Mammary epithelial cell (primary cell): ENCODE measurements at regions of chr3 and their contacts with region 1.

Region 1: DNA sequence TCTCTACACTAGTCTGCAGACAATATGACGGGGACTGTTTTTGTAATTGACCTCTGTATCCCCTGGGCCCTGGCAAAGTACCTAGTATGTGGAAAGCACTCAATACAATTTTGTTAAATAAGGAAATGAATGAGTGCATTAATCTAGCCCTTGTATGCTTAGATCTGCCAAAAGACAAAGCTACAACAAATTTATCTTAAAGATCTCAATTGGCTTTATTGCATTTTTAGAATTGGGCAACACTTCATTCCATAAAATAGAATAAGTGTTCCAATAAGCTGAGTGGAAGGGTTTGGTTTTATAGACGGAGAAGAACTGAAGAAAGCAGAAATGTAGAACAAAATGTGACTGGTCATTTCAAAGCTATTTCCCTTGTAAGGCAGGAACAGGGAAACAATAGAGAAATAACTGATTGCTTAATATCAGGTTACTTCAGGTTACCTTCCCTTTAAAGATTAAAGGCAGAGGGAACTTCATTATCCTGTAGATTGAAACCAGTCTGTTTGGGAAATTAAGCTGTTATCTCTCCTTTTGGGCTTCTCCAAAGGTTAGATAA is 108.3 kb upstream of the MME start:
- DNase-seq: peak; percentile 82
- H3K4me3 ChIP-seq: peak overlapping the region in 2 of 3 experiments; percentile 1 to 3
- H3K27ac ChIP-seq: peak overlapping the region; percentile 83
- H3K4me1 ChIP-seq: peaks cover 36% of the 10 kb centered on the region
- H3K27me3 ChIP-seq: no peaks in the 10 kb centered on the region
- CTCF ChIP-seq: no peak

Region 2: DNA sequence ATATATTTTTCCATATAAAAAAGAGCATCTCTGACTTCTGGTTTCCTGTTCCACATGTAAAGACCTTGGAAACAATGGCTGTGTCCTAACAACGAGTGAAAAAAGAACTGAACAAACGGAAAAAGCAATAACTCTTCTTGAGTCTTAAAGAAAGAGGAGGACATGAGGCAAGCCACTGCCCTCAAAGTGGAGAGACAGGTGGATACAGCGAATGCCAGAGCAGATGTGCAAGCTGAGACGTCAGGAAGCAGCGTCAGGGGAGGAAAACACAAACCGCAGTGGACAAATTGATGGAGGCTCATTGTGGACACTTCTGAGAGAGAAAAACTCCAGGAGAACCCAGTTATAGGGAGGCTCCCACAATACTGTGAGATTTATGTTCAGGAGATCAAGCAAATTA is 99.8 kb before region 1 on chr3:
- CTCF ChIA-PET with region 1: no interaction called
- dilution Hi-C with region 1: no loop called
- in situ Hi-C with region 1: no loop called
- intact Hi-C with region 1: no loop called
- DNase-seq: no peak
- H3K4me3 ChIP-seq: no peak overlapping the region
- H3K27ac ChIP-seq: no peak overlapping the region
- H3K4me1 ChIP-seq: no peaks in the 10 kb centered on the region
- H3K27me3 ChIP-seq: no peaks in the 10 kb centered on the region
- CTCF ChIP-seq: no peak

Region 3: GRCh38 chr3:155065537-155065936 is 93.7 kb after region 1 on chr3:
- CTCF ChIA-PET with region 1: no interaction called
- dilution Hi-C with region 1: no loop called
- in situ Hi-C with region 1: no loop called
- intact Hi-C with region 1: loop called (anchors 5 kb)
- DNase-seq: peak; percentile 92
- H3K4me3 ChIP-seq: no peak overlapping the region
- H3K27ac ChIP-seq: peak overlapping the region; percentile 26
- H3K4me1 ChIP-seq: peaks cover 6% of the 10 kb centered on the region
- H3K27me3 ChIP-seq: no peaks in the 10 kb centered on the region
- CTCF ChIP-seq: no peak